Heart left ventricle (tissue), 16 donors: ENCODE measurements at regions of chr9 and their contacts with region 1.

Region 1: DNA sequence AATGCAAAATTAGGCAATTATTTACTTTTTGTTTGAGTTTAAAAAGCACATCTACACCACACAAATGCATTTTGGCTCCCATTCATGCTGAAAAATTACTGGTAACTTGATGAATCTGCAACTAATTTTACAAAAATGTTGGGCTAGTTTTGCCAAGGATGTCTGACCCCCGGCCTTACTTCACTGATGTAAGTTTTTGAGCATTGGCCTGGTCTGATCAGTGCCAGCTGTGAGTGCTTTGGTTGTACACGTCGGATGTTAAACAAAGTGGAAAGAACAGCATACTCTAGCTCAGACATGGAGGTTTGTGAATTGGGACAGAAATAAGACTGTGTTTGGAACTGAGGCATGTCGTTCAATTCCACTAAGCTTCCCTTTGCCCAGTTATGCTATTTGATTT is 1044.2 kb downstream of the TLE4 start:
- DNase-seq: no peak
- ATAC-seq: no peak
- H3K4me3 ChIP-seq: no peak overlapping the region
- H3K27ac ChIP-seq: no peak overlapping the region
- H3K4me1 ChIP-seq: no peaks in the 10 kb centered on the region
- H3K27me3 ChIP-seq: no peaks in the 10 kb centered on the region
- CTCF ChIP-seq: no peak
- POLR2A ChIP-seq: no peak

Region 2: DNA sequence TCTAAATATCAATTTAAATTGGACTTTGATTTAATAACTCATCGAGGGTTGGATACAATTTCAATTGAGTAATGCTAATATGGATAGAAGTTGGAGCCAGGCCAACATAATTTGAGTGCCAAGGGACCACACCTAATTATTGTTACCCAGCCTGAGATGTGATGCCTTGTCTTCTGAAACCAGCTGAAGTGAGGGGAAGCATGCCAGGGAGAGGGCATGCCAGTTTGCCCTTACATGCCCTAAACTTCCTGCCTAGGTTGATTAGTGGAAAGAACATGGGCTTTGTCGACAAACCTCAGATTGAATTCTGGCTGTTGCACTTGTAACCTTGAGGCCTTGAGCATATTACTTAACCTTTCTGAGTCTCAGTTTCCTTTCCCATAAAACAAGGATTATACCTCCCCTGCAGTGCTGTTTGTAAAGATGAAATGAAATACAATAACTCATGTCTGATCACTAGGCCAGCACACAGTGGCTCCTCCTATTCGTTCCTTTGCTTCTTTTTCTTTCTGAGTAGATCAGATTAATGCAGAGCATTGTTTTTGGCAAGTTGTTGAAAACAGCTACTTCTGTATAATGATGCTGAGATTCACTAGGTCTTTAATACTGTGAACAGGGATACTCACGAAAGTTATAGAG is 631.4 kb before region 1 on chr9:
- intact Hi-C with region 1: no loop called
- DNase-seq: no peak
- ATAC-seq: no peak
- H3K4me3 ChIP-seq: no peak overlapping the region
- H3K27ac ChIP-seq: no peak overlapping the region
- H3K4me1 ChIP-seq: peaks cover 0 to 8% (median 0%) of the 10 kb centered on the region in 12 donors
- H3K27me3 ChIP-seq: peaks cover 0 to under 1% (median 0%) of the 10 kb centered on the region in 9 donors
- CTCF ChIP-seq: no peak
- POLR2A ChIP-seq: no peak

Region 3: GRCh38 chr9:80586786-80587330 is 29.1 kb before region 1 on chr9:
- intact Hi-C with region 1: loop called in 1 of 10 experiments (anchors 1 kb)
- DNase-seq: no peak
- ATAC-seq: no peak
- H3K4me3 ChIP-seq: no peak overlapping the region
- H3K27ac ChIP-seq: no peak overlapping the region
- H3K4me1 ChIP-seq: no peaks in the 10 kb centered on the region
- H3K27me3 ChIP-seq: no peaks in the 10 kb centered on the region
- CTCF ChIP-seq: no peak
- POLR2A ChIP-seq: no peak